ENCODE measurements at regions of chr2 and their contacts with region 1.

Region 1: GRCh38 chr2:16739778-16740581 is 74.3 kb upstream of the CYRIA start:
- DNase-seq: no peak
- H3K4me3 ChIP-seq: no peak overlapping the region
- CTCF ChIP-seq: no peak
- POLR2A ChIP-seq: no peak

Region 2: GRCh38 chr2:18154818-18155217 is 1414.8 kb after region 1 on chr2:
- intact Hi-C with region 1: no loop called
- DNase-seq: no peak
- H3K4me3 ChIP-seq: no peak overlapping the region
- CTCF ChIP-seq: no peak
- POLR2A ChIP-seq: no peak

Region 3: DNA sequence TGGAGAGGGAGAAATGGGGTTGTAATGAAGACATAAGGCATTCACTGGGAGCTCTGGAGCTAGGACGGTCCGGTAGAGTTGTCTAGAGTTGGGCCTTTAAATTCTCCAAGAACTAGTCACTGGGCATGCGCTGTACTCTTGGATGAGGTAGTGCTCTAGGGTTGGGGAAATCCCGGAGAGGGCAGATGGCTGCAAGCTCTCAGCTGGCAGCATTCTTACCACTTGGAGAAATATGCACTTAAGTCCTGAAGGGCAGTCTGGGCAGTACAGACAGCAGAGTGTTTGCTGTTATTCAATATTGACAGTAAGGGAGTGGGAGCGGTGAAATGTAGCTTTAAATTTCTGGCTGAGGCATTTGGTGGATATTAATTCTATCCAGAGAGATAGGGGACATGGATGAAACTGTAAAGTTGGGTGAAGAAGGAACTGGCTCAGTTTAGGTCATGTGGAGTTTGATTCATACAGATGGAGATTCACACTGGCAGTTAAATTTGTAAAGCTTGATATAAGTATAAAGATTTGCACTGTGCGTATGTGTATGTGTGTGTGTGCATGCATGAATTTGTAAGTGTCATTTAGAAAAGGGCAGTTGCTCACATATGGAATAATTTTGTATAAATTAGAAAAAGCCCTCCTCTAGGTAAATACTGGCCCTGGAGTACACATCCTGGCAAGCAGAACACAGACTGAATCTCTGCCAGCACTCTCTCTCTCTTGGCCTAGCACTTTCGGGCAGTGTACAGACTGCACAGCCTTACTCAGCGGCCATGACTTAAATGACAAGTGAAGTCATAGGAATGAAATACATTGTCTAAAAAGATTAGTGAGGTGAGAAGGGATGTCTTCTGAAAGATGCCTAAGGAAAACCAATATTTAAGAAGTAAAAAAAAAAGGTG is 1606.1 kb after region 1 on chr2:
- intact Hi-C with region 1: loop called (anchors 5 kb)
- DNase-seq: no peak
- H3K4me3 ChIP-seq: no peak overlapping the region
- CTCF ChIP-seq: no peak
- POLR2A ChIP-seq: no peak